ENCODE measurements at regions of chr10 and their contacts with region 1.

Region 1: GRCh38 chr10:97210543-97210961 is 24.8 kb upstream of the SLIT1 start:
- DNase-seq: peak; percentile 50 to 64 (median 57)
- H3K4me3 ChIP-seq: no peak overlapping the region
- H3K4me3 Mint-ChIP-seq: no peak overlapping the region
- H3K27ac ChIP-seq: no peak overlapping the region
- H3K27ac Mint-ChIP-seq: no peak overlapping the region
- H3K4me1 ChIP-seq: no peaks in the 10 kb centered on the region
- H3K4me1 Mint-ChIP-seq: no peaks in the 10 kb centered on the region
- H3K27me3 ChIP-seq: no peaks in the 10 kb centered on the region
- H3K27me3 Mint-ChIP-seq: peaks cover 0 to 1% of the 10 kb centered on the region in 2 donors

Region 2: DNA sequence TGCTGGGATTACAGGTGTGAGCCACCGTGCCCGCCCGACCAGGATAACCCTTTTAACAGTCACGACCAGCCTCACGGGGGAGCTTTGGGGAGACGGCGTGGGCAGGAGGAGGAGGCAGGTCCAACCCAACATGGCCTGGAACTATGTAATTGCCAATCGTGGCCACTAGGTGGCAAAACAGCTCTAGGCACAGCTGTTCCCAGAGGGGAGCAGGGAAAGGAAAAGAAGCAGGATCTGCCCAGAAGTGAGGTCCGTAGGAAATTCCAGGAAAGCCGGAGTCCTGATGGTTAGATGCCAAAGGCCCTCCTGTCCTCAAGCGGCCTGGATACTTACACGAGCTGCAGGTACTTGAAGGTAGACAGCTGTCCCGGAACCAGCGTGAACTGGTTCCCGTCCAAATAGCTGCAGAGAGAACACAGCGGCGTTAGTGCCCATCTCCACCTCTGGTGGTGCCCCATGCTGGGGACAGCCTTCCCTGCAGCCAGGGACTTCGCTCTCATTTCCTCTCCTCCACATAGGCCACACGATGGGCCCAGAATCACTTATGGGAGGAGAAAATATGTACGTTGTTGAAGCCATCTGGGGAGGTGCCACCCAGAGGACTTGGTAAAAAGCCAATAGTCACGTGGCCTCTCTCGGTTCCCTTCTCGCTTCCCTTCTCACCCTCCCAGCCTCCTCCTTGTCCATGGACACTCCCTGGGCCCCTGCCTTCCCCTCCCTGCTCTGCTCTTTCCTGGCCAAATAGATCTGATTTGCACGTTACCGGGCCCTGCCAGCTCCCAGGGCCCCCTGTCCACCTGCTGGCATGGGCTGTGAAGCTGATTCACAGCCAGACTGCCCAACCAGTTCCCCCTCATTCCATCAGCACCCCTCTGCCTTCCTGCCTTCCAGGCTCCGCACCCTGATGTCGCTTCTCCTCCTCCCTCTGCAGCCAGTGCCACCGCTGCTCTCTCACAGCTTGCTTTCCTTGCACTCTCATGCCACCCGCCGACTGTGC is 172.9 kb before region 1 on chr10:
- CTCF ChIA-PET with region 1: interaction called, 86 read pairs
- POLR2A ChIA-PET with region 1: no interaction called
- intact Hi-C with region 1: loop called (anchors 1 kb)
- DNase-seq: peak; percentile 51 to 64 (median 53)
- H3K4me3 ChIP-seq: peak overlapping the region; percentile 34 to 36
- H3K4me3 Mint-ChIP-seq: peak overlapping the region; percentile 69 to 86 (median 79)
- H3K27ac ChIP-seq: no peak overlapping the region
- H3K27ac Mint-ChIP-seq: peak overlapping the region in 4 of 7 donors; percentile 16 to 57 (median 42)
- H3K4me1 ChIP-seq: no peaks in the 10 kb centered on the region
- H3K4me1 Mint-ChIP-seq: peaks cover 7 to 19% (median 11%) of the 10 kb centered on the region in 4 donors
- H3K27me3 ChIP-seq: no peaks in the 10 kb centered on the region
- H3K27me3 Mint-ChIP-seq: peaks cover 4 to 10% of the 10 kb centered on the region in 2 donors

Region 3: DNA sequence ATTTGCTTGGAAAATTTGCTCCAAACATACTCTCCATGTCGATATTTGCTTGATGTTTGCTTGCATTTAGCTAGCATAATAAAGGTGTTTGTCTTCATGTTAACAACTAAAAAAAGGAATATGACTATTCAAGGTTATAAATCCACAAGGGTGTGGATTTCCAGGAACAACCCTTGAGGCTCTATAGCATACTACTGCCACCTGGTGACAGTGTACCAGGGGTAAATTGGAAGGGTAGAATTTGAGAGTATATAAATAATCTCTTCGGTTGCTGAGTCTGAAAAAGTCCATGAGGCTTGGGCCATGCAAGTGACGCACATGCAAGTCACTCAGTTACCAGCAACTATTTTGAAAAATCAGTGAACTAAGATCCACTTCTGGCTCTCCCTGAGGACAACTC is 93.2 kb before region 1 on chr10:
- CTCF ChIA-PET with region 1: interaction called, 11 read pairs
- POLR2A ChIA-PET with region 1: no interaction called
- intact Hi-C with region 1: no loop called
- DNase-seq: no peak
- H3K4me3 ChIP-seq: no peak overlapping the region
- H3K4me3 Mint-ChIP-seq: no peak overlapping the region
- H3K27ac ChIP-seq: no peak overlapping the region
- H3K27ac Mint-ChIP-seq: no peak overlapping the region
- H3K4me1 ChIP-seq: no peaks in the 10 kb centered on the region
- H3K4me1 Mint-ChIP-seq: no peaks in the 10 kb centered on the region
- H3K27me3 ChIP-seq: no peaks in the 10 kb centered on the region
- H3K27me3 Mint-ChIP-seq: peaks cover 9 to 12% of the 10 kb centered on the region in 2 donors

Region 4: DNA sequence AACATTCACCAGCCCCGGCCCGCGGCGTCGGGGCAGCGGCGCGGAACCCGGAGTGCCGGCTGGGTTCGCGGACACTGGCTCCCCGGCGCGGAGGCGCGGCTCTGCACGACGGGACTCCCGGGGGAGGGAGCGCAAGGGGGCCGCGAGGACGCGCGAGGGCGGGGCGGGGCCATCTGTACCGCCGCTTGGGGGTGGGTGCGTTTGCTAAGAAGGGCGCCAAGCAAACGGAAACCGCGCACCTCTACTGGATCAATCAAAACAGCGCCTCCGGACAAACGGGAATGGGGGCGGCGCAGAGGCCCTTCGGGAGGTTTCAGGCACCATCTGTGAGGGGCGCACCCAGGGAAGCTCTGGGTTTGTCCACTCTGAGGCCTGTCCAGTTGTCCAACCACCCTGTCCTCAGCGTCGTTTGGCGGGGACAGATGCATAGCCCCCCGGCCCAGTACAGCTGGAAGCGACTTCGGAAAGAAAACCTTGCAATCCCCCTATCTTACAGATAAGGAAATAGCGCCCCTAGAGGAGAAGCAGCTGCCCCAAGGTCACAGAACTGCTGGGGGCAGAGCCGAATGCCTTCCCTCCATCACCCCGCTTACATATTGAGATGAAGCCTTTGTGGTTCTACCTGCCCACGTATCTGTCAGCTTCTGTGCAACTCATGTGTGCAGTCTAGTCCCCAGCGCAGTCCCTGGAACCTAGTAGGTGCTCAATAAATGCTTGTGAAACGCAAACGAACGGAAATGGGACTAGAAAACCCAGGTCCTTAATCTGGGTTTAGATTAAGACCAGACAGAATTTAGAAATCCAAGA is 14.1 kb before region 1 on chr10:
- CTCF ChIA-PET with region 1: interaction called, 422 read pairs
- POLR2A ChIA-PET with region 1: no interaction called
- intact Hi-C with region 1: no loop called
- DNase-seq: peak; percentile 62 to 73 (median 66)
- H3K4me3 ChIP-seq: peak overlapping the region; percentile 52 to 64
- H3K4me3 Mint-ChIP-seq: peak overlapping the region; percentile 83 to 91 (median 86)
- H3K27ac ChIP-seq: no peak overlapping the region
- H3K27ac Mint-ChIP-seq: peak overlapping the region in 4 of 7 donors; percentile 25 to 70 (median 36)
- H3K4me1 ChIP-seq: peaks cover 6% of the 10 kb centered on the region
- H3K4me1 Mint-ChIP-seq: peaks cover 6 to 11% (median 7%) of the 10 kb centered on the region in 4 donors
- H3K27me3 ChIP-seq: no peaks in the 10 kb centered on the region
- H3K27me3 Mint-ChIP-seq: peaks cover 8 to 10% of the 10 kb centered on the region in 2 donors

Region 5: DNA sequence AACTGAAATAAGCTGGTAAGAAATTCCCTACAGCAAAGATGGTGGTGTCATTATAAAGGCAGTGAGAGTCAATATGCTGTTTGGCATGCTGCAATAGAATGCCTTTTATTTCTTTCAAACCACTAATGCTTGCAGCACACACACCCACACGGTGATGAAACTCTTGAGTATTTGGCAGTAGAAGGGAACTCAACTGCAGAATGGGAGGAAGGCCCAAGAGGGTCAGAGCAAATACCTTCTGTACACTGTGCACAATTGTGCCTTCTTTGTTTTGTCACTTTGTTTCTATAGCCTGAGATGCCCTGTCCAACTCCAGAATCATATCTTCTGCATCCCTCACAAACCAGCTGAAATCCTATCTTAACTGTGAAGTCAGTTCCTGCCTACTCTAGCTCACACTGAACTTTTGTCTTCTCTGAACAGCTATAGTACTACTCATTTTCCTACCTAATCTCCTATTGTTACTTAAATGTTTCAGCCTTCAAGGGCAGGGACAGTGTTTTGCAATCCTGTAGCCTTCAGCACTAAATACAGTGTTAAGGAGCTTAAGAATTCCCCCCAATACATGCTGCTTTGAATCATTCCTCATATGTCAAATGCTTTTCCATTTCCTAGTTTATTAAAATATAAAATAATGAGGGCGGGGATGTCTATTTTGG is 265.5 kb after region 1 on chr10:
- CTCF ChIA-PET with region 1: no interaction called
- POLR2A ChIA-PET with region 1: no interaction called
- intact Hi-C with region 1: no loop called
- DNase-seq: no peak
- H3K4me3 ChIP-seq: no peak overlapping the region
- H3K4me3 Mint-ChIP-seq: no peak overlapping the region
- H3K27ac ChIP-seq: no peak overlapping the region
- H3K27ac Mint-ChIP-seq: peak overlapping the region in 1 of 7 donors; percentile 14
- H3K4me1 ChIP-seq: no peaks in the 10 kb centered on the region
- H3K4me1 Mint-ChIP-seq: peaks cover 0 to 6% (median 2%) of the 10 kb centered on the region in 4 donors
- H3K27me3 ChIP-seq: no peaks in the 10 kb centered on the region
- H3K27me3 Mint-ChIP-seq: no peaks in the 10 kb centered on the region

Measured in CD4-positive, alpha-beta memory T cell (primary cell).